Caco-2 (cell line): ENCODE measurements at regions of chr12 and their contacts with region 1.

Region 1: DNA sequence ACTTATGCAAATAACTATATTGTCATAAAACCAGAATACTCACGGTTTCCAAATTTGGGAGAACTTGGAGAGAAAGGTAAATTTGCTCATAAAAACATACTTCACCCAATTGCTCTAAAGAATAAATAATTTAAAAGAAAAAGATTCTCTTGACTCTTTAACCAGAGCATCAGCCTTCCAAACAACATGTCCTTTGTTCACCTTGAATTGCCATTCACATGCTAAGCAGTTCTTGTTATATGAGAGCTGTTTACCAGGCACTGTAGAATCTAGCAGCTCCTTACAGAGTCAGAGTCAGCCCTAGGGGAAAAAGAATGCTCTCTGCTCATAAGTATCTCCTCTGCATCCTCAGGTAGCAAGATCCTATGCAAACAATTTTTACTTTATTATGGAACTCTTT is 10.2 kb downstream of the SLCO1A2 start:
- DNase-seq: no peak
- H3K4me3 ChIP-seq: no peak overlapping the region
- H3K4me3 Mint-ChIP-seq: no peak overlapping the region
- H3K27ac Mint-ChIP-seq: no peak overlapping the region
- H3K4me1 ChIP-seq: no peaks in the 10 kb centered on the region
- H3K4me1 Mint-ChIP-seq: no peaks in the 10 kb centered on the region
- H3K27me3 ChIP-seq: no peaks in the 10 kb centered on the region
- H3K27me3 Mint-ChIP-seq: no peaks in the 10 kb centered on the region
- CTCF ChIP-seq: no peak

Region 2: GRCh38 chr12:21308785-21309184 is 15.8 kb before region 1 on chr12:
- CTCF ChIA-PET with region 1: no interaction called
- POLR2A ChIA-PET with region 1: no interaction called
- intact Hi-C with region 1: loop called (anchors 1 kb)
- DNase-seq: no peak
- H3K4me3 ChIP-seq: no peak overlapping the region
- H3K4me3 Mint-ChIP-seq: no peak overlapping the region
- H3K27ac Mint-ChIP-seq: no peak overlapping the region
- H3K4me1 ChIP-seq: no peaks in the 10 kb centered on the region
- H3K4me1 Mint-ChIP-seq: no peaks in the 10 kb centered on the region
- H3K27me3 ChIP-seq: no peaks in the 10 kb centered on the region; the same call in 1 of the 2 replicates
- H3K27me3 Mint-ChIP-seq: peaks cover 21% of the 10 kb centered on the region
- CTCF ChIP-seq: no peak